Activated CD4-positive, alpha-beta T cell treated with anti-CD3 and anti-CD28 coated beads, Interleukin-2, amount 10 ng/mL, durations not matched to agents 24 days and 14 days (primary cell): ENCODE measurements at regions of chr20 and their contacts with region 1.

Region 1: DNA sequence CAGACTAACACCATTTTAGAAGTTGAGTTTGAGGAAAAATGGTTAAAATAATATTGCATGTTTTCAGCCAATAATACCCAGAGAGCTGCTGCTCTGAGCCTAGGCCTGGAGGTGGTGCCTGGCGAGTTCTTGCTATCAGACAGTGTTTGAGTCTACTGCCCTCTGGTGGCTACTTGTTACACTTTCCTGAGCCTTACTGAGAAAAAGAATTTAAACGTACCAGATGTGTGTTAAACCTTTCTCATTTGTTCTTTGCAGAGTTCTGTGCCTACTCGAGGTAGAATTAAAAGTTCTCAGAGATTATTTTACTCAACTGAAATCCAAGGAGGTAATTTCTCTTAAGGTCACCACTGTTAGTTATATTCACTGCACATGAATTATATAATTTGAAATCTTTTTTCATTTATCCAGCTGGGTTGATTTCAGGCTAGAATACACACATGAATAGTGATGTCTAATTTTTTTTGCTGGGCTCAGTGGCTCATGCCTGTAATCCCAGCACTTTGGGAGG is 38.2 kb downstream of the SHLD1 start:
- DNase-seq: peak; percentile 93
- H3K4me3 Mint-ChIP-seq: no peak overlapping the region
- H3K27ac Mint-ChIP-seq: no peak overlapping the region
- H3K4me1 Mint-ChIP-seq: peaks cover 2% of the 10 kb centered on the region
- H3K27me3 Mint-ChIP-seq: no peaks in the 10 kb centered on the region

Region 2: GRCh38 chr20:5529331-5530148 is 258.9 kb before region 1 on chr20:
- intact Hi-C with region 1: loop called (anchors 1 kb)
- DNase-seq: peak; percentile 95
- H3K4me3 Mint-ChIP-seq: peak overlapping the region; percentile 60
- H3K27ac Mint-ChIP-seq: peak overlapping the region; percentile 80
- H3K4me1 Mint-ChIP-seq: peaks cover 21% of the 10 kb centered on the region
- H3K27me3 Mint-ChIP-seq: no peaks in the 10 kb centered on the region

Region 3: DNA sequence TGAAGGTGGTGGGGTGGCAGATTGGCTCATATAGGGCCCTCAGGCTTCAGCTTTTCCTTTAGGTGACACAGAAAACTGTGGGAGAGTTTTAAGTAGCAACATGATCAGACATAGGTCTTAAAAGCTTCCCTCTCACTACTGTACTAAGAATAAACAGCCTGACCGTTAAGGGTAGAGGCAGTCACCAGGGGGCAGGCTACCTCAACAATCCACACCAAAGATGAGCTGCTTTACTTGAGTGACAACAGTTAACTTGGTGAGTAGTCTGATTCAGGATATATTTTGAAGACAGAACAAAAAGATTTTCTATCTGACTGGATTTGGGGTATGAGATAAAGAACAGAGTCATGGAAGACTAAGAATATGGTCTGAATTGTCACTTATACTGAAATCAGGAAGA is 231.3 kb before region 1 on chr20:
- intact Hi-C with region 1: loop called (anchors 1 kb)
- DNase-seq: peak; percentile 86
- H3K4me3 Mint-ChIP-seq: no peak overlapping the region
- H3K27ac Mint-ChIP-seq: no peak overlapping the region
- H3K4me1 Mint-ChIP-seq: peaks cover 3% of the 10 kb centered on the region
- H3K27me3 Mint-ChIP-seq: no peaks in the 10 kb centered on the region

Region 4: GRCh38 chr20:5569021-5569420 is 219.4 kb before region 1 on chr20:
- intact Hi-C with region 1: loop called (anchors 1 kb)
- DNase-seq: peak; percentile 86
- H3K4me3 Mint-ChIP-seq: no peak overlapping the region
- H3K27ac Mint-ChIP-seq: no peak overlapping the region
- H3K4me1 Mint-ChIP-seq: peaks cover 26% of the 10 kb centered on the region
- H3K27me3 Mint-ChIP-seq: no peaks in the 10 kb centered on the region

Region 5: DNA sequence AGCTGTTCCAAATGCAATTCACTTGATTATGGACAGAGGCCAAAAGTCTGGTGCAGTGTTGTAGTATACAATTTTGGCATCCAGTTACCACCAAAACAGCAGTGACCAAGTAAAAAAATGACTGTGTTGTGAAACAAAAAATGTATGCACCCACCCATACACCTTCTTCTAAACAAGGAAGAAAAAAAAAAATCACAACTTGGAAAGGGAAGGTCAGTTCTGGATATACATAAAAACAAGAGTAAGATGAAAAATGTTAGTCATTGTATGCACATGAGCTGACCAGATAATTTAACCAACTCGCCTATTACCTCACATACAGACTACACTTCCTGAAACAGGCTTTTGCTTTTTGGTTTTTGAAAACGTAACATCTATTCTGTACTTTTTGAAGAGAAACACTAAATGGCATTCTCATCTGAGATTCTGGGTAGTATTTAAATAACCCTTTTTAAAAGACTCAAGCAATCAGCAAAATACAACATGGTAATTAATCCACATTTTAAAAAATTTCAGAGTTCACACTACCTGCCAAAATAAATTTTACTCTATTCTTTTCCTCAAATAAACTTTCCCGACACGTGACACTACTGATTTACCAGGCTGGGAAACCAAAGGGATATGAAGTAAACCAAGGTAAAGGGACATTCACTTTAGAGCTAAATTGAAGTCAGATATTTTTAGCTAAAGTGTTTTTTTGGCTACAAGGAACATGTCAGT is 179.8 kb before region 1 on chr20:
- intact Hi-C with region 1: loop called (anchors 5 kb)
- DNase-seq: no peak
- H3K4me3 Mint-ChIP-seq: peak overlapping the region; percentile 97
- H3K27ac Mint-ChIP-seq: peak overlapping the region; percentile 74
- H3K4me1 Mint-ChIP-seq: peaks cover 41% of the 10 kb centered on the region
- H3K27me3 Mint-ChIP-seq: peaks cover 2% of the 10 kb centered on the region

Region 6: GRCh38 chr20:5642155-5642981 is 146.1 kb before region 1 on chr20:
- intact Hi-C with region 1: no loop called
- DNase-seq: no peak
- H3K4me3 Mint-ChIP-seq: no peak overlapping the region
- H3K27ac Mint-ChIP-seq: no peak overlapping the region
- H3K4me1 Mint-ChIP-seq: peaks cover 14% of the 10 kb centered on the region
- H3K27me3 Mint-ChIP-seq: no peaks in the 10 kb centered on the region

Region 7: DNA sequence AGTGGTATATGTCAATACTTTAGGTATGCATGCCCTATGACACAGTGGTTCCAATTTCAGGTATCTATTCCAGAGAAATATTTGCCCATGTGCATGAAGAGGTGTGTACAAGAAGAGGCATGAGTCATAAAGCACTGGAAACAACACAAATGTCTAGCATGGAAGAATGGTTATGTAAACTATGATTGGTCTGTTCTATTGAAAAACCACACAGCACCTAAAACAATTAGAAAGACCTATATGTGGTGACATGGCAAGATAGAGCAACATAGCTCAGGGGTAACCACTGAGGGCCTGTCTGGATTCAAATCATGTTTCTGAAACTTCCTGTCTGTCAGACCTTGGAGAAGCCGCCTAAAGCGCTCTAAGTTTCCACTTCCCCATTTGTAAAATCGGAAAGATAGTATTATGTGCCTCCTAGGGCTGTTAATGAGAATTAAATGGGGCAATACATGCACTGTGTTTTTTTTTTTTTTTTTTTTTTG is 114.2 kb before region 1 on chr20:
- intact Hi-C with region 1: loop called (anchors 10 kb)
- DNase-seq: peak; percentile 58
- H3K4me3 Mint-ChIP-seq: peak overlapping the region; percentile 19
- H3K27ac Mint-ChIP-seq: peak overlapping the region; percentile 79
- H3K4me1 Mint-ChIP-seq: peaks cover 7% of the 10 kb centered on the region
- H3K27me3 Mint-ChIP-seq: no peaks in the 10 kb centered on the region

Region 8: GRCh38 chr20:6074145-6074561 is 285.7 kb after region 1 on chr20:
- intact Hi-C with region 1: loop called (anchors 2 kb)
- DNase-seq: peak; percentile 65
- H3K4me3 Mint-ChIP-seq: no peak overlapping the region
- H3K27ac Mint-ChIP-seq: no peak overlapping the region
- H3K4me1 Mint-ChIP-seq: no peaks in the 10 kb centered on the region
- H3K27me3 Mint-ChIP-seq: peaks cover 4% of the 10 kb centered on the region